ENCODE measurements at regions of chr4 and their contacts with region 1.

Region 1: GRCh38 chr4:61911313-61911756 is 711.2 kb downstream of the ADGRL3 start:
- DNase-seq: no peak
- H3K4me3 Mint-ChIP-seq: no peak overlapping the region
- H3K27ac Mint-ChIP-seq: no peak overlapping the region
- H3K4me1 Mint-ChIP-seq: no peaks in the 10 kb centered on the region
- H3K27me3 Mint-ChIP-seq: no peaks in the 10 kb centered on the region

Region 2: DNA sequence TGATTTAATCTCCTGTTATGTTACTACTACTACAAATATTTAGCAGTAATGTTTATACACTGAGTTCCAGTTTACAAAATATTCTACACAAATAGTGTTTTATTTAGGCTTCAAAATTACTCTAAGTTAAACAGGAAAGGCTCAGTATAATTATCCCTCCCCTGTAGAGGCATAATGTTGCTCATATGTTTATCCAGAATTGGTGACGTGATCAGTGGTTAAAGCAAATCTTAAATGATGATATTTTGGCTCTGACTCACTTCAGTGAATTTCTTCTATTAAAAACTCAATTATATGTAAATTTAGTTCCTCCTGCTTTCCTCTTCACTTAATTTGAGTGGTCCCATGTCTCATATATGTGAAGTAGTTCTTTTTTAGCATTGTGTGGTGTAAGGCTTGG is 272.7 kb before region 1 on chr4:
- intact Hi-C with region 1: no loop called
- DNase-seq: no peak
- H3K4me3 Mint-ChIP-seq: no peak overlapping the region
- H3K27ac Mint-ChIP-seq: no peak overlapping the region
- H3K4me1 Mint-ChIP-seq: no peaks in the 10 kb centered on the region
- H3K27me3 Mint-ChIP-seq: no peaks in the 10 kb centered on the region

Region 3: DNA sequence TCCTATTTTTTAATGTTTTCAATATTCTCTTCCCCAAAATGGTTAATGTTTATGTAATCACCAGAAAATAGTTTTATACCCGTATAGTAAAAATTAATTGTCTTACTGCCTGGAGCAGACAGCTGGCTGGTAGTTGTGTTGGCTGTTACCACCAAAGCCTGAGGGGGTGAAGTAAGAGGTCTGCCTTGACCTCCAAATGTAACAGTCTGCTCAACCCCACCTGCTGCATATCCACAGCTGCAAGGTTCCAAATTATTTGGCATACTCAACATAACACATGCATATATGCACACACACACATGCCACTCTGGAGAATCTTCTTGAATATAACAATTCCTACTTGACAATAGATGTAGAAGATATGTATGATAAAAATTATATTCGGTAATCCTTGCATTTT is 86.9 kb before region 1 on chr4:
- intact Hi-C with region 1: no loop called
- DNase-seq: no peak
- H3K4me3 Mint-ChIP-seq: no peak overlapping the region
- H3K27ac Mint-ChIP-seq: no peak overlapping the region
- H3K4me1 Mint-ChIP-seq: no peaks in the 10 kb centered on the region
- H3K27me3 Mint-ChIP-seq: no peaks in the 10 kb centered on the region

Region 4: GRCh38 chr4:62881901-62882300 is 970.6 kb after region 1 on chr4:
- intact Hi-C with region 1: loop called (anchors 5 kb)
- DNase-seq: no peak
- H3K4me3 Mint-ChIP-seq: no peak overlapping the region
- H3K27ac Mint-ChIP-seq: no peak overlapping the region
- H3K4me1 Mint-ChIP-seq: no peaks in the 10 kb centered on the region
- H3K27me3 Mint-ChIP-seq: no peaks in the 10 kb centered on the region